Activated CD4-positive, alpha-beta T cell treated with anti-CD3 and anti-CD28 coated beads for 36 hours (primary cell): ENCODE measurements at regions of chr15 and their contacts with region 1.

Region 1: GRCh38 chr15:59104912-59105732 is at the start of gene CCNB2:
- DNase-seq: peak; percentile 92
- ATAC-seq: peak; percentile 99
- H3K4me3 Mint-ChIP-seq: peak within 1 kb of the TSS; percentile 91
- H3K27ac Mint-ChIP-seq: peak within 1 kb of the TSS; percentile 91
- H3K4me1 Mint-ChIP-seq: peaks cover 11% of the 10 kb centered on the region
- H3K27me3 Mint-ChIP-seq: no peaks in the 10 kb centered on the region
- total RNA-seq, gene CCNB2: 68.0 to 75.3 TPM

Region 2: GRCh38 chr15:59094077-59094476 is 11.0 kb before region 1 on chr15:
- CTCF ChIA-PET with region 1: no interaction called
- POLR2A ChIA-PET with region 1: no interaction called
- intact Hi-C with region 1: no loop called
- DNase-seq: no peak
- ATAC-seq: no peak
- H3K4me3 Mint-ChIP-seq: no peak overlapping the region
- H3K27ac Mint-ChIP-seq: no peak overlapping the region
- H3K4me1 Mint-ChIP-seq: peaks cover 7% of the 10 kb centered on the region
- H3K27me3 Mint-ChIP-seq: no peaks in the 10 kb centered on the region

Region 3: GRCh38 chr15:59656897-59657634 is 551.9 kb after region 1 on chr15 and contains the start of gene GTF2A2:
- CTCF ChIA-PET with region 1: no interaction called
- POLR2A ChIA-PET with region 1: interaction called, 4 read pairs
- intact Hi-C with region 1: loop called in 1 of 2 experiments (anchors 5 kb)
- DNase-seq: peak; percentile 97
- ATAC-seq: peak; percentile 100
- H3K4me3 Mint-ChIP-seq: no peak within 1 kb of the TSS
- H3K27ac Mint-ChIP-seq: peak within 1 kb of the TSS; percentile 89
- H3K4me1 Mint-ChIP-seq: peaks cover 10% of the 10 kb centered on the region
- H3K27me3 Mint-ChIP-seq: no peaks in the 10 kb centered on the region
- total RNA-seq, gene GTF2A2: 167 to 198 TPM